ENCODE measurements at regions of chr16 and their contacts with region 1.

Region 1: DNA sequence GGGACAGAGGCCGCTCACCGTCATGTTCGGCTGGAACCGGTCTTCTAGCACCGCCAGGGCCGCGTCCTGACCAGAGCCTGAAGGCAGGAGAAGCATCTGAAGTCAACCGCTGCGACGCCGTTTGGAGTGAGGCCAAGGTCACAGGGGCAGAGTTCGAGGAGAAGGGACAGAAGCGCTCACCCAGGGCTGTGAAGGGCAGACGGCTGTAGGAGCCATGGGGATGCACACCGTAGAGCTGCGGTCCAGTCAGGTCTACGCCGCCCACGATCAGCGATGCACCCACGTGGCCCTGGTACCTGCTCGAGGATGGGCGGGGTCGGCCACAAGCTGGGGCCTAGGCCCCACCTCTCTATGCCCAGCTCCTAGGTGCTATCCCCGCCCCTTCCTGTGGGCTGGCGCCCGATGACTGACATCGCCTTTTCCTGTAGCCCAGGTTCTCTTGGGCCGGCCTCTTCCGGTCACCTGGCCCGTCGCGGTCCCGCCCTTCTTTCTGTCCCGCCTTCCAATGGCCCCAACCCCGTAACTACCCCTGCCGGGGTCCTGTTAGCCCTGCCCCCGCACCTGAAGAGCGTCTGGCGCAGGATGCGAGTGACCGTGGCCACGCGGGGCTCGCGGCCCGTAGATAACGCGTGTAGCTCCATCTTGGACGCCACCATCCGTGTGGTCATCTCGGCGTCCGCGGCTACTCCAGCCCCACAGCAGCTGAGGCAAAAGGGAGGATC is 1.1 kb downstream of the PSMB10 start:
- DNase-seq: peak; percentile 98
- ATAC-seq: peak; percentile 85
- H3K4me3 Mint-ChIP-seq: peak overlapping the region; percentile 100
- H3K27ac Mint-ChIP-seq: peak overlapping the region; percentile 99
- H3K4me1 Mint-ChIP-seq: peaks cover 44% of the 10 kb centered on the region
- H3K27me3 Mint-ChIP-seq: no peaks in the 10 kb centered on the region

Region 2: GRCh38 chr16:67561824-67562525 is 373.6 kb before region 1 on chr16:
- CTCF ChIA-PET with region 1: no interaction called
- POLR2A ChIA-PET with region 1: interaction called, 10 read pairs
- DNase-seq: peak; percentile 99
- ATAC-seq: peak; percentile 92
- H3K4me3 Mint-ChIP-seq: peak overlapping the region; percentile 88
- H3K27ac Mint-ChIP-seq: peak overlapping the region; percentile 95
- H3K4me1 Mint-ChIP-seq: peaks cover 43% of the 10 kb centered on the region
- H3K27me3 Mint-ChIP-seq: no peaks in the 10 kb centered on the region

Region 3: GRCh38 chr16:67872786-67873537 is 62.6 kb before region 1 on chr16 and contains the start of gene EDC4:
- CTCF ChIA-PET with region 1: interaction called, 4 read pairs
- POLR2A ChIA-PET with region 1: interaction called, 13 read pairs
- DNase-seq: peak; percentile 88
- ATAC-seq: peak; percentile 91
- H3K4me3 Mint-ChIP-seq: peak within 1 kb of the TSS; percentile 89
- H3K27ac Mint-ChIP-seq: peak within 1 kb of the TSS; percentile 92
- H3K4me1 Mint-ChIP-seq: peaks cover 31% of the 10 kb centered on the region
- H3K27me3 Mint-ChIP-seq: no peaks in the 10 kb centered on the region
- total RNA-seq, gene EDC4: 111 to 113 TPM

Region 4: DNA sequence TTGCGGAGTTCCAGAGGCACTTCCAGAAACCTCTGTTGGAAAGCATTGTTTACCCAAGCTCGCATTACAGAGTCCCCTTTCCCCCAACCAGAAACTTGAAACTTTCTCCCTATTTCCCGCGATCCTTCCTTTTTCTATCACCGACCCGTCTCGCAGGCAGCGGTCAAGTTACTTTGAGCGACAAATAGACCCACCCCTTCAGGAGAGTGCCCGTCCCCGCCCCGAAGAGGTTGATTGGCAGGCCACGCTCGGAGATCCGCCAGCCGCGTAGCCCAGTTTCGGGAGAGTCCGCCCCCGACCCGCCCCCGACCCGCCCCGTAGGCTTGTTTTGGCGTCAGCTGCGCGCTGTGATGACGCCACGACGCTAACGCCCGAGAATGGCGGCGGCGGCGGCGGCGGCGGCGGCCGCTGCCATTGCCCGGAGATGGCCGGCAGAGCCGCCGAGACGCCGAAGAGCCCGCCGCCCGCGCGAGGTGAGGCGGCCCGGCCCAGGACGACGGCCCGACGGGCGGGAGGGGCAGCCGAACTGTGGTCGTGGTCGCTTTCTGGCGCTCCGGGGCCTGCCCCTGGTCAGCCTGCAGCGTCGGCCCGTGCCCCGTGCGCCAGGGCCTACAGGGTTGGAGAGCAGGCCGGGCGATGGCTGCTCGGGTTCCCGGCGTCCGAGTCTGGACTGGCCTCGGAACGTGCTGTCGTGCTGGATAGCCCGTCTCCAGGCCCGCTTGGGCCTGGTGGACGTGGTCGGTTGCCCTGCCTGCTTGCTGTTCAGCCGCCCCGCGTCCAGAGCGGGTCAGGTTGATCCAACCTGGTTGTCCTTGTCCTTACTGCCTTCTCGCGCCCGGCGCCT is 42.4 kb before region 1 on chr16 and contains the start of gene PSKH1:
- CTCF ChIA-PET with region 1: no interaction called
- POLR2A ChIA-PET with region 1: interaction called, 15 read pairs
- DNase-seq: peak; percentile 96
- ATAC-seq: peak; percentile 99
- H3K4me3 Mint-ChIP-seq: peak within 1 kb of the TSS; percentile 97
- H3K27ac Mint-ChIP-seq: peak within 1 kb of the TSS; percentile 97
- H3K4me1 Mint-ChIP-seq: peaks cover 26% of the 10 kb centered on the region
- H3K27me3 Mint-ChIP-seq: no peaks in the 10 kb centered on the region
- total RNA-seq, gene PSKH1: 20.0 to 22.8 TPM

Region 5: DNA sequence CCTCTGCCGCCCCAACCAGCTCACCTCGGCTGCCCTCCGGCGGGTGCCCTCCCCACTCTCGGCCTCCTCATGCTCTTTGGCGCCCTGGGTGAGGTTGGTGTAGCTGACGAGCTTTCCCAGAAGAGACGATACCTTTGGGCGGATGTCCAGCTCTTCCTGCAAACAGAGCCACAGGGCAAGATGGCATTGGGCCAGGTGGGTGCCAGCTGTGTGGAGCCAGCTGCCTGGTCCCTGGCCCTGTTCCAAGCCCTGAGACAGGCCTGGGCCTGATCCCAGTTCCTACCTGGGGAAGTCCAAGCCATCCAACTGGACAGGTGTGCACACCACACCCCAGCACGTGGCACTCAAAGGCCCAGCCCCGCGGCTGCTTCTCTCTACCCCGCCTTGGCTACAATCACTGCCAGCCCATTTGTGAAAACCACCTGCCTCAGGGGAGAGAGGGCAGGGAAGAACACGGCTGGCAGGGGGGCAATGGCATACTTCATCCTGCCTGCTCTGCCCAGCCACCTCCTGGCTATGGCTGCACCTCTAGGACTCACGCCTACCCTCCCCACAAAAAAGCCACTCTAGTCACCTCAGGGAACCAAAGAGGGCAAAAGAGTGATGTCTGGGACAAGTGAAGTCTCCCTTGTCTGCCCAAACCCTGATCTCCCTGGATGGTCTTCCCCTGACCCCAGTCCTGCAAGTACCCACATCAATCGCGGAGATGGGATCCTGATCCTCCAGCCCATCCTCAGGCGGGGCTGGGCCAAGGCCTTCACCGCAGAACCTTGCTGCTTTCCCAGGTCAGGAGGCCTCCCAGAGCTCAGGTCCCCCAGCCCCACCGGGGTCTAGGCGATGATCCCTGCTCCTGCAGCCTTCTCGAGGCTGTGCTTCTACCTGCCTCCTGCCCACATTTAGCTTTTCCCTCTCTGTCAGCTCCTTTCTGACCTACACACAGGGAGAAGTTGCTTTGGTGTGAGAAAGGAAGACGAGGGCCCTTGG is 26.3 kb after region 1 on chr16:
- CTCF ChIA-PET with region 1: interaction called, 7 read pairs
- POLR2A ChIA-PET with region 1: interaction called, 25 read pairs
- DNase-seq: no peak
- ATAC-seq: no peak
- H3K4me3 Mint-ChIP-seq: no peak overlapping the region
- H3K27ac Mint-ChIP-seq: no peak overlapping the region
- H3K4me1 Mint-ChIP-seq: peaks cover 18% of the 10 kb centered on the region
- H3K27me3 Mint-ChIP-seq: no peaks in the 10 kb centered on the region

Region 6: DNA sequence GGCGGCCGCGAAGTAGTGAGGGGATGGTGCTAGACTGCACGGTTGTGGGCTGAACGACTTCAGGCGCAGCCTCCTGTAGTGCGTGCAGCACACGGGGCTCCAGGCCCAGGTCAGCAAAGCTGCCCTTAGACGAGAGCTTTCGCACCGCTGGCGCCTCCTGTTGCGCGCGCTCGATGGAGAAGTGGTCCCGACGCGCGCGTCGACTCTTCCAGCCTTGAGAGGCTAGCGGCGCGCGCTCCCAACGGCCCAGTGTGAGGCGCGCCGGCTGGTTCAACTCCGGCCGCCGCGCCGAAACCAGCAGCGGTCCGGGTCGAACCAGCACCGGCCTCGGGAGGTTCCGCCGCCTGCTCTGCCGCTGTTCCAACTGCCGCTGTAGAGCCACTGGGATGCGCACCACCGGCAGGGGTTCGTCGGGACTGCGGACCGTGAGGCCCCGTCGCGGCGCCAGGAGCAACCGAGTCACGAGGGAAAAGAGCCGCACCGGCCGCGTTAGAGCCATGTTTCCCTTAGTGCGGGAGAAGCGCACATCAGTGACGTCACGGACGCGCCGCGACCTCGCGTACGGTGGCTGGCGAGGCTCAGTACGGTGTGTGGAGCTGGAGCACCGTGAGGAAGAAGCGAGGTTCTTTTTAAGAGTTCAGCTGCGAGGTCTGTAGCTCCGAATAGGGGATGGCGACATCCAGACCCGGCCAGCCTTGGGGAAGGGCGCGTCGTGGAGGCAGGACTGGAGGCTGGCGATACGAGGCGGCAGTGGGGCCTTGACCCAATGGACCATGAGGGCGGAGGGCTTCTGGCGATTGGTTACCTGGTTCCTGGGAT is 87.3 kb after region 1 on chr16 and contains the starts of genes DDX28 and DUS2:
- CTCF ChIA-PET with region 1: interaction called, 4 read pairs
- POLR2A ChIA-PET with region 1: interaction called, 16 read pairs
- DNase-seq: peak; percentile 95
- ATAC-seq: peak; percentile 92
- H3K4me3 Mint-ChIP-seq: peak within 1 kb of the TSS; percentile 94
- H3K27ac Mint-ChIP-seq: peak within 1 kb of the TSS; percentile 95
- H3K4me1 Mint-ChIP-seq: peaks cover 29% of the 10 kb centered on the region
- H3K27me3 Mint-ChIP-seq: no peaks in the 10 kb centered on the region
- total RNA-seq, gene DDX28: 13.6 to 13.9 TPM
- total RNA-seq, gene DUS2: 24.1 to 25.2 TPM

Measured in activated CD8-positive, alpha-beta T cell treated with anti-CD3 and anti-CD28 coated beads, Interleukin-2, amount 10 ng/mL, durations not matched to agents 7 days and 5 days (primary cell).